A549 (cell line): ENCODE measurements at regions of chr2 and their contacts with region 1.

Region 1: GRCh38 chr2:235779444-235779896 is 285.6 kb downstream of the AGAP1 start:
- DNase-seq: peak; percentile 70 to 72
- ATAC-seq: peak; percentile 96 to 99
- H3K4me3 ChIP-seq: no peak overlapping the region
- H3K27ac ChIP-seq: no peak overlapping the region
- H3K4me1 ChIP-seq: no peaks in the 10 kb centered on the region
- CTCF ChIP-seq: peak; percentile 87
- EP300 ChIP-seq: no peak
- POLR2A ChIP-seq: no peak
- RAD21 ChIP-seq: peak; percentile 85 to 87

Region 2: DNA sequence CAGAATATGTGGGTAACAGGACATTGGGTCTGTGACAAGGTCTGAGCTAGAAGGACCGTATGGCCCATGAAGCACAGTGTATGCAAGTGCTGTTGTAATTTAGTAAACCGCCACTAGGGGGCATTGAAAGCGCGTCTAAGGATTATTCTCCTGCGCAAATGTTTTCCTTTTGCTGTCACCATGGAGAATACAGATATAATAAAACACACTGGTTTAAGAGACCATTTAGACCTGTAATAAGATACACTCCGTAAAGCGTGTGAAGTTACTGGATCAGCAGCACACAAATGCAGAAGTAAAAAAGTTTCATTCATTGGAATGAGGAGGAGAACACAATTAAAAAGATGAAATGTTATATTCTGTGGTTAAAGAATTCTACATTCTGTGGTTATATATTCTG is 13.2 kb before region 1 on chr2:
- CTCF ChIA-PET with region 1: interaction called, 33 read pairs
- POLR2A ChIA-PET with region 1: no interaction called
- DNase-seq: peak; percentile 65 to 81
- ATAC-seq: peak; percentile 93 to 97
- H3K4me3 ChIP-seq: no peak overlapping the region
- H3K27ac ChIP-seq: no peak overlapping the region
- H3K4me1 ChIP-seq: peaks cover 9% of the 10 kb centered on the region; the same call in 1 of the 3 replicates
- CTCF ChIP-seq: peak; percentile 89
- EP300 ChIP-seq: no peak
- POLR2A ChIP-seq: no peak
- RAD21 ChIP-seq: peak; percentile 61 to 69

Region 3: DNA sequence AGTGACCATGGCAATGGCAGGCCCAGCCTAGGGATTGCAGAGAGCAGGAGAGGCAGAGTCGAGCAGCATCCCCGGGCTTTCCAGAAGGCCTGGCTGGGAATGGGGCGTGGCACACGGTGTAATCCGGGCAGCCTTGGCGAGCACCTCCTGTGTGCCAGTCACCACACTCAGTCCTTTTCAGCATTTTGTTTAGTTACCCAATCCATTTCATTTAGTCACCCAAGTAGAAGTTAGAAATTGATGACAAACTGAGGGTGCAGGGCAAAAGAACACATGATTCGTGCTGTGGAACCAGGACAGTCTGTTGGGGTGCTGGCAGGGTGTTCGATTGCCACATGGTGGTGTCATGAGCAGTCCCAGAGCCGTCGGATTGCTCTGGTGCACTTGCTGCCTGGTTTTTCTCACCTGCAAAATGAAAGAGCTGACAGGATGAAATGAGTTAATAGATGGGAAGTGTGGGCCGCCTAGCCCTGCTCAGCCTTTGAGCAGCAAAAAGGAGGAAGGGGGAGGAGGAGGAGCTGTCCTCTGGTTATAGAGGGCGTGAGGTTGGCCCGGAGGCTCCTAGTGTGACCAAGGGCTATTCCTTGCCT is 13.8 kb after region 1 on chr2:
- CTCF ChIA-PET with region 1: interaction called, 85 read pairs
- POLR2A ChIA-PET with region 1: no interaction called
- DNase-seq: peak; percentile 6 to 25
- ATAC-seq: peak; percentile 83 to 91
- H3K4me3 ChIP-seq: no peak overlapping the region
- H3K27ac ChIP-seq: no peak overlapping the region
- H3K4me1 ChIP-seq: no peaks in the 10 kb centered on the region
- CTCF ChIP-seq: peak; percentile 41
- EP300 ChIP-seq: no peak
- POLR2A ChIP-seq: no peak
- RAD21 ChIP-seq: 0 out of 5 replicates have a peak, but pooled peaks of 1 of the 2 experiments have one; percentile 23

Region 4: GRCh38 chr2:235799281-235799680 is 19.8 kb after region 1 on chr2:
- CTCF ChIA-PET with region 1: interaction called, 85 read pairs
- POLR2A ChIA-PET with region 1: no interaction called
- DNase-seq: no peak
- ATAC-seq: no peak
- H3K4me3 ChIP-seq: no peak overlapping the region
- H3K27ac ChIP-seq: no peak overlapping the region
- H3K4me1 ChIP-seq: no peaks in the 10 kb centered on the region
- CTCF ChIP-seq: no peak
- EP300 ChIP-seq: no peak
- POLR2A ChIP-seq: no peak
- RAD21 ChIP-seq: no peak

Region 5: DNA sequence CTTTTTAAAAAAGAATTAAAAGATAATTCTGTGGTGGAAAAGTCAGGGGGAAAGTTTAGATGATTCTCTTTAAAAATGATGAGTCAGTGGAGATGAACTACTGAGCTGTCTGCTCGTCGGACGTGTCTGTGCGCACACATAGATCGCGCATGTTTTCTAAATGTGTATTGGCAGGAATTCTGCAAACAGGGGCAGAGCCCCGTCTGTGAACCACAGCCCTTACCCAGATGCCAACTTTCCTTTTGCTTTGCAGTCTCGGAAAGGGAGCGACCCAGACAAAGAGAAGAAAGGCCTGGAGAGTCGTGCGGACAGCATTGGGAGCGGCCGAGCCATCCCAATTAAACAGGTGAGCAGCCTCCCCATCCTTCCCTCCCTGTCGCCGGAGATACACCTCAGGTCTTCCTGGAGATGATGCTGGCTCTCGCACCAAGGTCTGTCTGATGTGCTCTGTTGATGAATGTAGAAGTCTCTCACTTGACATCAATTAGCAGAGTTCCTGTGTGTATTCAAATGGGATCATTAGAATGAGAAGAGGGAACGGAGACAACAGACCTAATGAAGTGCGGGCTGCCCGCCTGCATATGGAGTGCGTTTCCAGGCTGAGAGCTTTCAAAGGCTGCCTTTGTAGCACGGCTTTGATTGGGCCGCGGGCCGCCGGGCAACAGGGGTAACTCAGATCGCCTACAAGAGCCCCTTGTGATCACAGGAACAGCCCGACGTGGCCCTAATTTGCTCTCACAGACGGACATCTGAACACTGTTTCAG is 27.7 kb after region 1 on chr2:
- CTCF ChIA-PET with region 1: interaction called, 11 read pairs
- POLR2A ChIA-PET with region 1: no interaction called
- DNase-seq: no peak
- ATAC-seq: no peak
- H3K4me3 ChIP-seq: no peak overlapping the region
- H3K27ac ChIP-seq: no peak overlapping the region
- H3K4me1 ChIP-seq: no peaks in the 10 kb centered on the region
- CTCF ChIP-seq: no peak
- EP300 ChIP-seq: no peak
- POLR2A ChIP-seq: peak; percentile 8; the same call in 1 of the 2 replicates
- RAD21 ChIP-seq: no peak

Region 6: DNA sequence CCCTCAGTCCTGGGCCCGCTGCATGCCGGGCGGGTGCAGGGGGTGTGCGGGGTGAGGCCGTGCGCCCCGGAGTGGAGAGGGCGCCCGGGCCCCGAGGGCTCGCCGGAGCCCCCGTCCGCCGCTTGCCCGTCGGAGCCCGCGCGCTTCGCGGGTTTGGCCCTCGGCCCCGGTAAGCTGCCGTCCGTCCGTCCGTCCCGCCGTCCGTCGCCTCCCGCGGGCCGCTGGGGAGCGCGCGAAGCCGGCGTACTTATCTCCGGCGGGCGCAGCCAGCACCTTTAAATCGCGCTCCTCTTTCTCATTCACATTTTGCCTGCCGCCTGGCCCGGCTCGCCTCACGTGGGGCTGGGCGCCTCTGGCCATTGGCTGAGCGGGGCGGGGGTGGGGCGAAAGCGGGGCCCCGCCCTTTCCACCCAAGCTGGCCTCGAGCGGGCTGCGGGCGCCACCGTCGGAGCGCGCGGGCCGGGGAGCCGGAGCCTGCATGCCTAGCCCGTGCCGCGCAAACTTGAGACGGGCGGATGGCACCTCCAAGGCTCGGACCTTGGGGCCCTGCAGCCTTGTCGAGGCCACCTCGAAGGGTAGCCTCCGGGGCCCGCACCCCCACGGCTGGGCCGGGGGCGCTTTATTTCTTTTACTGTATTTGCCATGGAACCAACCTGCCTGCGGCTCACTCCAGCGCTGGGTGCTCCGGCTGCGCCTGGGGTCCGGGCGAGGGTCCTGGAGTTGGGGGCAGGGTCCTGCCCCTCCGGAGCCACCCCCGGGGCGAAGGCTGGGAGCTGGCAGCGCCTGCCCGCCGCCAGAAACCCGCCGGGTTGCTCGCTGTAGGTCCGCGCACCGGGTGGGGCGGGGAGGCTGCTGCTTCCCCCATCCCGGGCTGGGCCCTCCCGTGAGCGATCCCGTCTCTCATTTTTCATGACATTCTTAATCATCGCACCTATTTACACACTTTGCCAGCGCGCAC is 388.9 kb after region 1 on chr2 and contains the start of gene GBX2:
- CTCF ChIA-PET with region 1: interaction called, 17 read pairs
- POLR2A ChIA-PET with region 1: no interaction called
- DNase-seq: peak; percentile 89 to 94
- ATAC-seq: peak; percentile 87 to 92
- H3K4me3 ChIP-seq: peak within 1 kb of the TSS; percentile 73
- H3K27ac ChIP-seq: peak within 1 kb of the TSS; percentile 79 to 92
- H3K4me1 ChIP-seq: peaks cover 9% of the 10 kb centered on the region; the same call in 2 of the 3 replicates
- CTCF ChIP-seq: no peak
- EP300 ChIP-seq: no peak
- POLR2A ChIP-seq: peak; percentile 81
- RAD21 ChIP-seq: peak in 1 of 2 experiments; percentile 52; a peak in 3 of 5 replicates
- polyA plus RNA-seq, gene GBX2: 0.85 and 1.2 TPM in 2 replicates

Region 7: DNA sequence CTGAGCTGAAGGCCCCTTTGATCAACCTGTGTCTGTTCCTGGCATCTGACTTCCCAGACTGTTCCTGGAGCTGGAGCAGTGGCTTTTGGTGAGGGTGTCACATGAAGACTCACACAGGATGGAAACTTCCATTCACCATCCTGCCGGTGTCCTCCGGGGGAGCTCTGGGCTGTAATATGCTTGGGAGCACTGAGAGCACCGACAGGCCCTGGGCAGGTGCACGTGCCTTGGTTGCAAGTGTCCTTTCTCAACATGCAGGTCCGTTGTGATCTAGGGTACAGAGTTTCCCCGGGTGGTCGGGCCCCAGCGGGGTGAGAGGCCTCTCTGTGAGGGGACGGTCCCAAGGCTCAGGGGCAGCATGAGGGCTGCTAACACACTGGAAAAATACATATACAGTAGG is 413.6 kb after region 1 on chr2:
- CTCF ChIA-PET with region 1: interaction called, 14 read pairs
- POLR2A ChIA-PET with region 1: no interaction called
- DNase-seq: no peak
- ATAC-seq: peak in 1 of 2 experiments; percentile 35; a peak in 1 of 6 replicates
- H3K4me3 ChIP-seq: no peak overlapping the region
- H3K27ac ChIP-seq: no peak overlapping the region
- H3K4me1 ChIP-seq: no peaks in the 10 kb centered on the region
- CTCF ChIP-seq: no peak
- EP300 ChIP-seq: no peak
- POLR2A ChIP-seq: no peak
- RAD21 ChIP-seq: no peak